Activated CD4-positive, alpha-beta T cell treated with anti-CD3 and anti-CD28 coated beads for 36 hours (primary cell): ENCODE measurements at regions of chr2 and their contacts with region 1.

Region 1: DNA sequence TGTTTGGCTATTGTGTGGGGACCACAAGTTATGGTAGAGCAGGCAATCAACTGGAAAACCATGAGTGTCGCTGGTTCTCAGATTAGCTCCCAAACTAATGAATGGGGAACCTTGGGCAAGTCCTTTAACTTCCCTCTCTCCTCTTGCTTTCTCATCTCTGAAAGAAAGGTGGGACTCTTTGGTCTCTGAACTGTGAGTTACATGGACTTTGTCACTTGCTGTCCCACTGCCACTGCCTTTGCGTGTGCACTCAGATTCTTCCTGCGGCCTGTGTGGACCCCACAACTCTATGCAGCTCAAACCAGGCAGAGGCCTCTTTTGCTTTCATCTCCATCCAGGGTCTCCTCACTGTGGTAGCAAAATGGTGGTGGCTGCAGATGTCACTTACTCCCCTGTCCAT is 86.7 kb downstream of the RNF144A start:
- DNase-seq: no peak
- ATAC-seq: no peak
- H3K4me3 Mint-ChIP-seq: no peak overlapping the region
- H3K27ac Mint-ChIP-seq: no peak overlapping the region
- H3K4me1 Mint-ChIP-seq: peaks cover 9% of the 10 kb centered on the region
- H3K27me3 Mint-ChIP-seq: no peaks in the 10 kb centered on the region

Region 2: DNA sequence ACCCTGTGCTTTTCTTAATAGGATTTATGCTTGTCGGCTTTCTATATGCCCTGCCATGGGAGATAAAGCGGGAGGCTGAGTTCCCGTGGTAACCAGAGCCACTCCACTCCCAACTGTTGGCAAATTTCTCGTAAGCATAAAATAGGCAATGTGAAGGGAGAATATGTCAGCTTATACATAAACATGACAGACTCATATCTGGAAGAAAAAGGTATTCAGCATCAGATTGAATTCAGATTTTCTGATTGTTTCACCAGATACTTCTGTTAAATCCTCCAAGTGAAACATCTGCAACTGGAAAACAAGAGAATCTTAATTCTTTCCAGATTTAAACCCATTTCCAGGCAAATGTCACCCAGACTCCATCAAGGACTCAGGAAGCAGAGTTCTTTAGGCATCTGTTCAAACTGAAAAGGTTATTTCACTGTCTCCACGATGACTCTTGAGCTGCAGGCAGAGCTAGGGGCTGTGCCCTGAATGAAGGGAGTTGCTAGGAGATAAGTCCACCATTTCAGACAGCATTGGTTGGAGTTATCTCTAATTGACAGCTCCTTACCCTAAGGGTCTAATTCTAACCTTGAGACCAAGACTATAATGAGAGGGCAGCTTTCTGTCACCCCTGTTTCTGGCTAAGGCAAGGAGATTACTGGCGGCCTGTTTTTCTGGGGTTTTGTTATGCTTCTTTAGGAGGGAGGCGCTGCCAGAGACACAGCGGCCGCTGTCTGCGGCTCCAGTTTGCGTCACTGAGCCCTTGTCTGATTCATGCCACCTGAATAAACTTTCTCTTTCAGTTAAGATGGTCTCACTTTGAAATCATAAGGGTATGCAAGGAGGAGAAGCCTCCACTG is 930.4 kb before region 1 on chr2:
- CTCF ChIA-PET with region 1: no interaction called
- POLR2A ChIA-PET with region 1: no interaction called
- intact Hi-C with region 1: no loop called
- DNase-seq: peak; percentile 4
- ATAC-seq: no peak
- H3K4me3 Mint-ChIP-seq: no peak overlapping the region
- H3K27ac Mint-ChIP-seq: no peak overlapping the region
- H3K4me1 Mint-ChIP-seq: no peaks in the 10 kb centered on the region
- H3K27me3 Mint-ChIP-seq: no peaks in the 10 kb centered on the region

Region 3: GRCh38 chr2:7014174-7014640 is 10.3 kb after region 1 on chr2:
- CTCF ChIA-PET with region 1: interaction called, 12 read pairs
- POLR2A ChIA-PET with region 1: no interaction called
- intact Hi-C with region 1: no loop called
- DNase-seq: peak; percentile 43
- ATAC-seq: peak; percentile 39
- H3K4me3 Mint-ChIP-seq: no peak overlapping the region
- H3K27ac Mint-ChIP-seq: peak overlapping the region; percentile 27
- H3K4me1 Mint-ChIP-seq: peaks cover 40% of the 10 kb centered on the region
- H3K27me3 Mint-ChIP-seq: no peaks in the 10 kb centered on the region